MCF 10A (cell line): ENCODE measurements at regions of chr5 and their contacts with region 1.

Region 1: GRCh38 chr5:168027007-168027406 is 264.4 kb upstream of the WWC1 start:
- DNase-seq: no peak
- H3K4me3 Mint-ChIP-seq: no peak overlapping the region
- H3K27ac Mint-ChIP-seq: no peak overlapping the region
- H3K4me1 Mint-ChIP-seq: no peaks in the 10 kb centered on the region
- H3K27me3 Mint-ChIP-seq: peaks cover 16% of the 10 kb centered on the region
- CTCF ChIP-seq: no peak

Region 2: GRCh38 chr5:167378894-167379723 is 647.9 kb before region 1 on chr5:
- CTCF ChIA-PET with region 1: no interaction called
- POLR2A ChIA-PET with region 1: no interaction called
- intact Hi-C with region 1: no loop called
- DNase-seq: no peak
- H3K4me3 Mint-ChIP-seq: no peak overlapping the region
- H3K27ac Mint-ChIP-seq: no peak overlapping the region
- H3K4me1 Mint-ChIP-seq: no peaks in the 10 kb centered on the region
- H3K27me3 Mint-ChIP-seq: no peaks in the 10 kb centered on the region
- CTCF ChIP-seq: no peak

Region 3: DNA sequence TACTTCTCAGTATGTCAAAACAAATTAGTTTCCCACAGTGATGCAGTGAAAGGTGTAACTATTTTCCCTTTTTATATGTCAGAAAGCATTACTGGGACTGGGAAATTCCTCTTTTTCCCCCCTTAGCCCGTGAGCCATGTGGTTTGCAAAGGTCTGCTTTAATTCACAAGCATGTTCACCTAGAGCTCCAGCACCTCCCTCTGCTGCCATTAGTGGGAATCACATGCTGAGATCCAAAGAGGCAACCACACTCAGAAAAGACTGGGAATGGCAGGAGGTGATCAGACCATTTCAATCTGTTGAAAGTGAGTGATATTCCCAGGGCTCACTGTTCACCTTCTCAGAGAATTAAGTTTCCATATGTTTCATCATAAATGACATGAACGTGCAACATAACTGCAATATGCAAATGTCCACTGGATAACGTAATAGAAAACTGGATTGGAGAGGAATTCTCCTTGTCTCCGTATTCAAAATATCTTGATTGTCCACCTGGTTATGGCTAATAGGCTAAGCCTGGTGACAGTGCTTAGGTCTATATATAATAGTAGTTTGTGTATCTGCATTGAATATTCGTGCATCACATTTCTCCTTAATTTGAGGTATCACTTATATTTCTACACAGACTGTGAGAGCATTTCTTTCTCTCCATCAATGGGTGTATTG is 439.1 kb before region 1 on chr5:
- CTCF ChIA-PET with region 1: interaction called, 14 read pairs
- POLR2A ChIA-PET with region 1: interaction called, 5 read pairs
- intact Hi-C with region 1: no loop called
- DNase-seq: peak; percentile 78
- H3K4me3 Mint-ChIP-seq: no peak overlapping the region
- H3K27ac Mint-ChIP-seq: no peak overlapping the region
- H3K4me1 Mint-ChIP-seq: peaks cover 10% of the 10 kb centered on the region
- H3K27me3 Mint-ChIP-seq: no peaks in the 10 kb centered on the region
- CTCF ChIP-seq: peak; percentile 65

Region 4: DNA sequence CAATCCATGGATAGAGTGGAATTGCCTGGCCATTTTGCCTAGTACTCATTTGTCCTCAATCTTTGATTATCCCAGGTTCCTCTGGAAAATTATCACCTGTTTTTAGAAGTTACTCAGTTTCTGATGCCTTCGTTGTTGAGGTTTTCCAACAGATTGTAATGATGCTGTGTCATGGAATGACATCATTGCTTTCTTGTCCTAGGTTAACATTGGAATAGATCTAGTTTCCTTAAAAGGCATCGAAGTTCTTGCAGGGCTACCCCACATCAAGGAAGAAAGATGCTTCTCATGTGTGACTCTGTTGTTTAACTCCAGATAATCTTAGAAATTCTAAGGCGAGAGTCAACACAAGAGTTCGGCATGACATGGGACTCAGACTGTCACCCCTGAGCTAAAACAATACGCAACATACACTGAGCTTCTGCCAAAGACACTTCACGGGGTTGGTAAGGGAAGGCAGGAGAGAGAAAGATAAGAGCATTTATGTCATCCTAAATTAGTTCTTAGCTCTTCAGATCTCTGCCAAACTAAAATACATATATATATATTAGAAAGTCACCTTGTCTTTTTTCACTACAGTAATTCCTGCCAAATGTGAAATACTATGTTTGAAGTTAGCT is 28.7 kb before region 1 on chr5:
- CTCF ChIA-PET with region 1: no interaction called
- POLR2A ChIA-PET with region 1: no interaction called
- intact Hi-C with region 1: no loop called
- DNase-seq: no peak
- H3K4me3 Mint-ChIP-seq: no peak overlapping the region
- H3K27ac Mint-ChIP-seq: no peak overlapping the region
- H3K4me1 Mint-ChIP-seq: no peaks in the 10 kb centered on the region
- H3K27me3 Mint-ChIP-seq: no peaks in the 10 kb centered on the region
- CTCF ChIP-seq: no peak